Prostate gland (tissue), 2 donors: ENCODE measurements at regions of chr20 and their contacts with region 1.

Region 1: DNA sequence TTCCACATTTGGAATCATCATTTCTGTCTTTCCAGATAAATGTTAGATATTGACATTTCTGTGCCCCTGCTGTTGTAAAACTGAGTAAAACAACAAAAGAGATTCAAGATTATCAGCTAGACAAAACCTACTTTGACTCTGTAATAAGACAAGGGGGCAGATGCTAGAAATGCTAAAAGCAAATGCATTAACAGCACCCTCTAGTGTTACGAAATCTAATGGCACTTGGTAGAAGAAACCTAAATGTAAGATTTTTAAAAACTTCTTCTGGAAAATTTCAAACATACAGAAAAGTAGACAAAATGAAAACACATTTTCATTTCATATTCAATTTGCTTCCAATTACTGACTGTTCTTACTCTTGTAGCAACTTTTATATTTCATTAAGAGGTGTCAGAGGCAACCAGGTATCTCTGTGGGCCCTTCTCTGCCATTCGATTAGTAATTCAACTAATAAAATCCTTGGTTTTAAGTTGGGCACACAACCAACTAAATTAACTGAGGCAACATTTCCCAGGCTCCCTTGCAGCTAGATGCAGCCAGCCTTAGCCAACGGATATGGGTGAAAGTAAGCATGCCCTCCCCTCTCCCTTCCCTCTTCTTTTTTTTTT is 45.0 kb downstream of the SLC23A2 start:
- DNase-seq: no peak
- H3K4me3 ChIP-seq: no peak overlapping the region
- H3K27ac ChIP-seq: no peak overlapping the region
- H3K4me1 ChIP-seq: no peaks in the 10 kb centered on the region
- H3K27me3 ChIP-seq: no peaks in the 10 kb centered on the region
- CTCF ChIP-seq: peak; percentile 62 to 85 (median 74)
- POLR2A ChIP-seq: no peak

Region 2: DNA sequence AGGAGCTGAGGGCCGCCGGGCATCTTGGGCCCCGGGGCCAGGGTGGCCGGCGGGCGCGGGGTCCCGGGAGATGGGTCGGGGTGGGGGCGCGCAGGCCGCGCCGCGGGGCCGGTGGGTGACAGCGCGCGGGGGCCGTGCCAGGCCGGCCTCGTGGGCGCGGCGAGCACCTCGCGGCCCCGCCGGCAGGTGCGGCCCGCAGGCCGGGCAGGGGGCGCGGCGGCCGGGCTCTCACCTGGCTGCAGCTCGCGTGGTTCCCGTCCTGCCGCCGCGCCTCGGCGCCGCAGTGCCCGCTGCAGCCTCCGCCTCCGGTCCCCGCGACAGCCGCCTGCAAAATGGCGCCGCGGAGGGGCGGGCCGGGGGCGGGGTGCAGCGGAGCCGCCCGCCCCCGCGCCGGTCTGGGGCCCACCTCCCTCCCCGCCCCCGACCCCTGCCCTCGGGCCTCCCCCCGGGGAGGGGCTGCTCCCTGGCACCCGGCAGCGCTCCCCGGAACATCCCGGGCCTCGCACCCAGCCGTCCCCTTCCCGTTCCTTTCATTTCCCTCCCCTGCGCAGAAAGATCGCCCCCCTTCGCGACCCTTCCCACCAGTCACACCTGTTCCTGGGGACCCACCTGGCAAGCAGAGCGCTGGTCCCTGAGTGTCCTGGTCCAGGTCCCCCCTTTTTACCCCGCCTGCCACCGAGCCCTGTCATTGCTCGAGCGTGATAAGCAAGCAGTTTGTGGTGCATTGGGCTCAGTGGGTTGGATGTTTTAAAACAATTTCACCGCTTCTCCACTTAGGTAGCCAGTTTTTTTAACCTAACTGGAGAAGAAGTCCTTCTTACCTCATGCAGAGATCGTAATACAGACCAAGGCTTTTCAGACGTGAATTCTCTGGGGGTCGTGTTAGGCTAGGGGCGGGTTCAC is 45.1 kb after region 1 on chr20 and contains the start of gene SLC23A2:
- intact Hi-C with region 1: no loop called
- DNase-seq: peak; percentile 14
- H3K4me3 ChIP-seq: peak within 1 kb of the TSS; percentile 63 to 70
- H3K27ac ChIP-seq: peak within 1 kb of the TSS; percentile 26 to 53
- H3K4me1 ChIP-seq: no peaks in the 10 kb centered on the region
- H3K27me3 ChIP-seq: no peaks in the 10 kb centered on the region
- CTCF ChIP-seq: no peak
- POLR2A ChIP-seq: no peak
- total RNA-seq, gene SLC23A2: 21.0 to 39.1 TPM

Region 3: DNA sequence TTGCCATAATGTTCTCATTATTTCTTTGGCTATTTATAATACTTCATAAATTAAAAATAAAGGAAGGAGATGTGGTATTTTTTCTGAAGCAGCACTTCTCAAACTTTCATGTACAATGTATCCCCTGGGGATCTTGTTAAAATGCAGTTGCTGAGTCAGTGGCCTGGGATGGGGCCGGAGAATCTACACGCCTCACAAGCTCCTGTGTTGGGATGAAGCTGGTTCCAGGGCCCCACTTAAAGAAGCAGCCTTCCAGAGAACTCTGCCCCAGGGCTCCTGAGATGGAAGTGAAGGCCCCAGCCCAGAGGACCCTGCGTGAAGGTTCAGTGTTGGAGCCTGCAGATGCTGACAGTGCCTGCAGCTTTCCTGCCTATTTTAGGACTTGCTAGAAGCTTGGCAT is 85.1 kb after region 1 on chr20:
- intact Hi-C with region 1: no loop called
- DNase-seq: no peak
- H3K4me3 ChIP-seq: no peak overlapping the region
- H3K27ac ChIP-seq: no peak overlapping the region
- H3K4me1 ChIP-seq: no peaks in the 10 kb centered on the region
- H3K27me3 ChIP-seq: no peaks in the 10 kb centered on the region
- CTCF ChIP-seq: no peak
- POLR2A ChIP-seq: no peak

Region 4: GRCh38 chr20:5090191-5090590 is 133.9 kb after region 1 on chr20:
- intact Hi-C with region 1: loop called (anchors 10 kb)
- DNase-seq: no peak
- H3K4me3 ChIP-seq: no peak overlapping the region
- H3K27ac ChIP-seq: no peak overlapping the region
- H3K4me1 ChIP-seq: no peaks in the 10 kb centered on the region
- H3K27me3 ChIP-seq: no peaks in the 10 kb centered on the region
- CTCF ChIP-seq: no peak
- POLR2A ChIP-seq: no peak